Activated T-helper 1 cell treated with anti-CD3 and anti-CD28 coated beads, Interleukin-12 subunit alpha, Interleukin-12 subunit beta, Interleukin-2, Interleukin-4 antibody, amounts not matched to agents 30 ng/mL and 10 ng/mL and 1 ng/mL, durations not matched to agents 14 hours and 24 hours and 36 hours (primary cell): ENCODE measurements at regions of chr4 and their contacts with region 1.

Region 1: DNA sequence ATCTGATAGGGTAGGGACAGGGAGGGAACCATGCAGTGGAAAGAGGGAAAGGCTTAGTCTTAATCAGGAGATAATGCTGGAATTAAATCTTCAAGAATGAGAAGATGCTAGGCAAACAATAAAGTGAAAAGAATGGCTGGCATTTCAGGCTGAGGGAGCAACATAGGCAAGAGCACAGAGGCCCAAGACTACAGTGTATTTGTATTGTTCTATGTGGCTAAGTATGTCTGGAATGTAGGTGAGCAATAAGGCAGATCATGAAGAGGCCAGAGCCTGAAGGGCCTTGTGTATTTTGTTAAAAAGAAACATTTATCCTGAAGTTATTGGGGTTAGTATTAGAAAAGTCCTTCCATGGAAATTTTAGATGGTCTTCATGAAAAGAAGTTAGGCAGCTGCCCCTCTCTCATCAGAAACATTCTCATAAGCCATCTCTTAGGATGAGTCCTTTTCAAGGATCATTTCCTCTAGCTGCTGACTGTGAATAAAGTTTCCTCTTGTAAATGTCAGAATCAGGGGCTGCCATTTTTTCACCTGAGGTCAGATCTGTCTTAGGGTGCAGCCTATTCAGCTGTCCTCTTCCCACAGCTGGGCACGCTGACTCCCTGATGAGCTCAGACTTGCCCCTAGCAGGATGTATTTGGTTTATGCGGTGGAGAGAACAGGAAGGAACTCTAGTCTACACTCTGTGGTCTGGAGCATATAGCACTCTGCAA is 46.3 kb downstream of the ATP10D start:
- DNase-seq: peak; percentile 70
- H3K4me3 Mint-ChIP-seq: peak overlapping the region; percentile 0
- H3K27ac Mint-ChIP-seq: peak overlapping the region; percentile 21
- H3K4me1 Mint-ChIP-seq: peaks cover 48% of the 10 kb centered on the region
- H3K27me3 Mint-ChIP-seq: no peaks in the 10 kb centered on the region

Region 2: DNA sequence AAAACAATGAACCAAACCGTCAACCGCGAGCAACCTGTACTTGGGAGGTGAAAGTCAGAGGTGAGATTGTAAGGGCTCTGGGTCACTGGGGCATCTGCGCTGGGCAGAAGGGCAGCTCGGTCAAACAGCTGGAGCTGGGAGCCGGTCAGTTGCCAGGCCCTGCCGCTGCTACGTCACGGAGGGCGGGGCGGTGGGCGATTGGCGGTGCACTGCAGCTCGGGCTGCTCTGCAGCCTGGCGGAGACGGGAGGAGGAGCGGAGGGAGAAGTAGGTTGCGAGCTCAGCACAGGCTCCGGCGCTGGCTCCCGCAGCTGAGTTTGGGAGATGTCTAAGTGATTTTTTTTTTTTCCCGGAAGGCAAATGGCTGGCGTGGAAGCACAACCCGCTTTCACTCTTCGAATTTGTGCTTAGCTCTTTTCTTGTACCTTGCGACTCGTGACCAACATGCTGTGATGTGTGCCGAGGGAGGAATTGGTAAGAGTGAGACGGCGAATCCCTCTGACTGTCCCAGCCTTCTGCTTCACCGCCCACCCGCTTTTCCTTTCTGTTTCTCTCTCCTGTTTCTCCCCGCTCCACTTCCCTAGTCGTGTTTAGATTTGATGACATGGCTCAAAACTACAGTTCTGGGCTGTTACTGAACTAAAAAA is 46.2 kb before region 1 on chr4 and contains the start of gene ATP10D:
- intact Hi-C with region 1: loop called (anchors 2 kb)
- DNase-seq: peak; percentile 72
- H3K4me3 Mint-ChIP-seq: peak within 1 kb of the TSS; percentile 92
- H3K27ac Mint-ChIP-seq: peak within 1 kb of the TSS; percentile 51
- H3K4me1 Mint-ChIP-seq: peaks cover 27% of the 10 kb centered on the region
- H3K27me3 Mint-ChIP-seq: peaks cover 9% of the 10 kb centered on the region
- total RNA-seq, gene ATP10D: 1.6 and 1.9 TPM in 2 replicates